Activated CD4-positive, alpha-beta T cell treated with anti-CD3 and anti-CD28 coated beads, Interleukin-2, amount 10 ng/mL, durations not matched to agents 24 days and 14 days (primary cell): ENCODE measurements at regions of chr9 and their contacts with region 1.

Region 1: DNA sequence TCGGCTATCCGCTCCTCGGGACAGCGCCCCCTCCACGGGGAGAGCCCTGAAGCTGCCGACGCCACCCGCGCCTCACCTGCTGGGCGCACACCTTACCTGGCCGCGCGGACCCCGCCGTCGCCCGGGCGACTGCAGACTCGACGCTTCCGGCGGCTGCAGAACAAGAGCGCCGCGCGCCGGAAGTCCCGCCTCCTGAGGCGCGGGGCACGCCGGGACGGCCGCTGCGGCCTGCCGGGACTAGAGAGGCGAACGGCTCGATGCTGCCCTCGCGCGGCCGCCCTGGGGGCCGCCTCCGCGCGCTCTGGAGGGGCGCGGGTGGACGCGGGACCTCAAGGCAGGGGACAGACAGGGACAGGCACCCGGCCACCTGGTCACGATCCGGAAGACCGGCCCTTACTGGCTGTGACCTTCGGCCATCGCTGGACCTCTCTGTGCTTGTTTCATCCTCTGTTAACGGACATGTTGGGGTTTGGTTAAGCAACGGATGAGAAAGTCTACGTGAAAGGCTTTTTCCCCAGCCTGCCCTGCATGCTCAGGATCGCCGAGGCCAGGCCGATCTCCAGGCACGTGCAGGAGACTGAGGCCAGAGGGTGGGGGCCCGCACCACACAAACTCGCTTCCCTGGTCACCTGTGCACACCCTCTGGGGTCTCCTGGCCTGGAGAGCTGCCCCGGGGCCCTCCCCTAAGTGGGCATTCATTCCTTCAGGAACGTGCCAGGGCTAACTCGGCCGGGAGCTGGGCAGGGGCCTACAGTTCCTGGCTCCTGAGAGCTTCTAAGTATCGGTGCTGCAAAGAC is at the start of gene SNAPC4:
- DNase-seq: peak; percentile 97
- H3K4me3 Mint-ChIP-seq: peak within 1 kb of the TSS; percentile 94
- H3K27ac Mint-ChIP-seq: peak within 1 kb of the TSS; percentile 86
- H3K4me1 Mint-ChIP-seq: peaks cover 40% of the 10 kb centered on the region
- H3K27me3 Mint-ChIP-seq: no peaks in the 10 kb centered on the region
- total RNA-seq, gene SNAPC4: 27.3 and 28.0 TPM in 2 replicates

Region 2: GRCh38 chr9:136312436-136312835 is 87.8 kb before region 1 on chr9:
- intact Hi-C with region 1: loop called (anchors 1 kb)
- DNase-seq: peak; percentile 80
- H3K4me3 Mint-ChIP-seq: no peak overlapping the region
- H3K27ac Mint-ChIP-seq: no peak overlapping the region
- H3K4me1 Mint-ChIP-seq: no peaks in the 10 kb centered on the region
- H3K27me3 Mint-ChIP-seq: no peaks in the 10 kb centered on the region

Region 3: DNA sequence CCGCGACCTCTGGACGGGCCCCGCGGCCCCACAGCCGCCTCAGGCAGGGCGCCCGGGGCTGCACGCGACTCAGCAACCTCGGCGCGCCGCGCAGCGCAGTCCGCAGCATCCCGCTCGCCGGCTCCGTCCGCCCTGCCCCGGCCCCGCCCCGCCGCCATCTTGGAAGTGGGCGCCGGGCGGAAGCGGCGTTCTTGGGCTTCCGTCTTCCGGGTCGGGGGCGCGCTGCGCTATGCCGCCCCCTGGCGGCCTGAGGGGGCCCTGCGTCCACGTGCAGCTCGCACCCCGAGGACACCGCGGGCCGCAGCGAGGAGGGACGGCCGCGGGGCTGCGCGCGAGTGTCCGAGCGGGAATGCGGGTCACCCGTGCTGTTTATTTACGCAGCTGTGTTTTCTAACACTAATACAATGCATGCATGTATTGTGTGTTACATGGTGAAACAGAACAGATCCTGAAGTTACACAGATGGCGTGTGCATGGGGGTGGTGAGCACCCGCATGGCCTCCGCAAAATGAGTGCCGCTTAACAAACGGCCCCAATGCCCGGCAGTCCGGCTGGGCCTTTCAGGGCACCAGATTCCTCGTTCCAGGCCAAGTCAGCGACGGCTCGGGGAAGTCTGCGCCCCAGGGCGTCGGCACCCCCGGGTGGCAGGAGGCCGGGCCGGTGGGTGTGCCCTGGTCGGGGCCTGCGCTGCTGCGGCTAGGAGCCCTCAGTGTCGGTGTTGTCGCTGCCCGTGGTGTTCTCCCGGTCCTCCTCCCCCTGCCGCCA is 36.4 kb before region 1 on chr9 and contains the start of gene DNLZ:
- intact Hi-C with region 1: loop called (anchors 1 kb)
- DNase-seq: peak; percentile 96
- H3K4me3 Mint-ChIP-seq: peak within 1 kb of the TSS; percentile 83
- H3K27ac Mint-ChIP-seq: peak within 1 kb of the TSS; percentile 89
- H3K4me1 Mint-ChIP-seq: peaks cover 4% of the 10 kb centered on the region
- H3K27me3 Mint-ChIP-seq: no peaks in the 10 kb centered on the region
- total RNA-seq, gene DNLZ: 31.5 and 34.0 TPM in 2 replicates

Region 4: GRCh38 chr9:136385015-136385414 is 15.2 kb before region 1 on chr9:
- intact Hi-C with region 1: loop called (anchors 2 kb)
- DNase-seq: peak; percentile 86
- H3K4me3 Mint-ChIP-seq: peak overlapping the region; percentile 68
- H3K27ac Mint-ChIP-seq: peak overlapping the region; percentile 65
- H3K4me1 Mint-ChIP-seq: peaks cover 16% of the 10 kb centered on the region
- H3K27me3 Mint-ChIP-seq: no peaks in the 10 kb centered on the region

Region 5: DNA sequence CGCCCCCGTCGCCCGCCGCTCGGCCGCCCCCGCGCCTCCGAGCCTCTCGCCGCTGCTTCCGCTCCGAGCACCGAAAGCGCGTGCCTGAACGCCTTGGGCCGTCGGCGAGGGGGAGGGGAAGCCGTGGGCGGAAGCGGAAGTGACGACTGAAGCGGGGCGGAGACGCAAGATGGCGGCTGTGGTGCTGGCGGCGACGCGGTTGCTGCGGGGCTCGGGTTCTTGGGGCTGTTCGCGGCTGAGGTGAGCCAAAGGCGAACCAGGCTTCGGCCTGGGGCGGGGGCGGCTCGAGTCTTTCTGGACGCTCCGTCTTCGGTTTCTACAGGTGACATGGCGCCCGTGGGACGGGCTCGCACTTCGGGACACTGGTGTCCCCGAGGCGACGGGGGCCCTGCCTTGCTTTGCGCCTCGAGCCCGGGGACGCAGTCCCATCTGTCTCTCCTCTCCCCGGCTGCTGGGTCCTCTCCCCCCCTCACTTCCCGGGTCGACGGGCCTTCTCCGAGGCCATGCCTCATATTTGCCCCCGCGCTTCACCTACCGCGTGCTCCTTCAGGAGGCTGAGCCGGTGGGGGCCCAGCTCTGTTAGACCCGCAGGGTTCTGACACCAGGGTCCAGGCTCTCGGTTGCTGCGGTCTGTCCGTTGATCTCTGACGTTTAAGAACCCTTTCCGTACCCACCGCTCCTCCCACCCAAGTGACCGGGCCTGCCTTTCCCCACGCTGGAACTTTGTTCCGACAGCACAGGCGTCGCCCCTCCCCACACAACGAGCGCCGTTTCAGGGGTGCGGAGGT is 10.5 kb after region 1 on chr9 and contains the starts of genes ENTR1 and PMPCA:
- intact Hi-C with region 1: loop called (anchors 1 kb)
- DNase-seq: peak; percentile 99
- H3K4me3 Mint-ChIP-seq: peak within 1 kb of the TSS; percentile 94
- H3K27ac Mint-ChIP-seq: peak within 1 kb of the TSS; percentile 95
- H3K4me1 Mint-ChIP-seq: peaks cover 40% of the 10 kb centered on the region
- H3K27me3 Mint-ChIP-seq: no peaks in the 10 kb centered on the region
- total RNA-seq, gene ENTR1: 56.4 and 60.0 TPM in 2 replicates
- total RNA-seq, gene PMPCA: 114 and 124 TPM in 2 replicates

Region 6: GRCh38 chr9:136482793-136483588 is 82.8 kb after region 1 on chr9 and contains the start of gene SEC16A:
- intact Hi-C with region 1: loop called (anchors 5 kb)
- DNase-seq: peak; percentile 99
- H3K4me3 Mint-ChIP-seq: peak within 1 kb of the TSS; percentile 94
- H3K27ac Mint-ChIP-seq: peak within 1 kb of the TSS; percentile 97
- H3K4me1 Mint-ChIP-seq: peaks cover 20% of the 10 kb centered on the region
- H3K27me3 Mint-ChIP-seq: peaks cover 2% of the 10 kb centered on the region
- total RNA-seq, gene SEC16A: 79.2 and 81.2 TPM in 2 replicates